Dendritic cell treated with granulocyte-macrophage colony-stimulating factor and Interleukin-4, amounts not matched to agents 40 ng/mL and 50 ng/mL, for 4 days (primary cell): ENCODE measurements at regions of chr15 and their contacts with region 1.

Region 1: DNA sequence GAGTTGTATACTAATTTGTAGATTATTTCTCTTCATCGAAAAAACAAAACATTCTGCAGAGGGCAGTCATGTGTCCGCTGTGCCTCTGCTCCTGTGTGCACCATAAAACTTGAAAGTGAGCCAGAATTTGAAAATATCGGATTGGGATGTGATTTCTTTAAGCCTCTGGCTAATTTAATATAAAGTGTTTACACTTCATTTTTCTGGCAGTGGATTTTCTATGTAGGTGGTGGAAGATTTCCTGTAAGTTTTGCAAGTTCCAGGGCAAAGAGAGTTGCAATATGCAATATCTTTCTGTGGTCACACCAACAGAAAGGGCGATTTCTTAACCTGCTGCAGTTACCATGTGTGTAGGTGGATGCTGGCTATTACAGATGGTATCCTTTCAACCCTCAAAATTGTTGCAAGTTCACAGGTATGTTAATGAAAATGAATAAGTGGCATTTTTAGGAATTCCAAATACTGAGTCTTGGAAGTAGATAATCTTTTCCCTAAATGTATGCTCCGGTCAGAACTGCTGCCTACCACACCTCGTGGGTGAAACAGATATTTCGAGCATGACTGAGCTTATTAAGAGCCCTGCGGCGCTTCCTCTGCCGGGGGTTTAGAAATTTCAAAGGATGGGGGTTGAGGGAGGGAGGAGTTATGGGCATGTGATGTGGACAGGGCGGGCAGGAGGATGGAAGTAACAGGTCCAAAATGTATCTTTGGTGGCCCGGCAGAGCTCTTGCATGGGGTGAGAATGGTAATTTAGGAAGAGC is 134.0 kb downstream of the PGPEP1L start:
- H3K4me3 Mint-ChIP-seq: peak overlapping the region; percentile 64
- H3K27ac Mint-ChIP-seq: peak overlapping the region; percentile 25
- H3K4me1 Mint-ChIP-seq: peaks cover 55% of the 10 kb centered on the region
- H3K27me3 Mint-ChIP-seq: no peaks in the 10 kb centered on the region

Region 2: GRCh38 chr15:98658831-98659699 is 214.6 kb before region 1 on chr15:
- intact Hi-C with region 1: no loop called
- H3K4me3 Mint-ChIP-seq: no peak overlapping the region
- H3K27ac Mint-ChIP-seq: no peak overlapping the region
- H3K4me1 Mint-ChIP-seq: peaks cover 30% of the 10 kb centered on the region
- H3K27me3 Mint-ChIP-seq: peaks cover 3% of the 10 kb centered on the region

Region 3: GRCh38 chr15:98779463-98780071 is 94.1 kb before region 1 on chr15:
- intact Hi-C with region 1: loop called (anchors 5 kb)
- H3K4me3 Mint-ChIP-seq: no peak overlapping the region
- H3K27ac Mint-ChIP-seq: no peak overlapping the region
- H3K4me1 Mint-ChIP-seq: peaks cover 25% of the 10 kb centered on the region
- H3K27me3 Mint-ChIP-seq: no peaks in the 10 kb centered on the region

Region 4: DNA sequence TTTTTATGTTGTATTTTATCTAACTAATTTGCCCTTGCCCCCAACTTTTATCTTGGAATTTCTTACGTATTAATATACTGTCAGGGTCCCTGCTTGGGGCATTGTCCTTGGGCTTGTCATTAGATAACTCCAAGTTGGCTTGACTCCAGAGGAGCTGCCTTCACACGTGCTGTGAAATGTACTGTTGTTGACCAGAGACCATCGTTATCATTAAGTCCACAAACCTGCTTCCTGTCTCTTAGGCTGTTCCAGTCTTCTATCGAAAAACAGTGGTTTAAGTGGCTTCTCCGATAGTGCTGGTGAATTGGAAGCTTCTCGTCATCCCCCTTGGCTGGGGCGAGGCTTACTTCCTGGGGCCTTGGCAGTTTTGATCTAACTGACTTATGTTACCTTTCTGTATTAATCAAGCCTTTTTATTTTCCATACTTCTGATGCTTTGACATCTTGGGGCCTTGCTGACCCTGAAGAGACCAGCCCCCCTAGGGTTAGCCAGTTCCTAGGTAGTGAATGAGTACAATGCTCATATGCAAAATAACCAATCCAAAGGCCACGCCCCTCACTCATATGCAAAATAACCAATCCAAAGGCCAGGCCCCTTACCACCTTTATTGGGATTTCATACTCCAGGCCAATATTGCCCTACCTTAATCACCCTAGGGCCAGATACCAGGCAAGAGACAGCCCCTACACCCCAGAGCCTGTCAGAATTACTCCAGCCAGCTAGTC is 60.7 kb before region 1 on chr15:
- intact Hi-C with region 1: no loop called
- H3K4me3 Mint-ChIP-seq: no peak overlapping the region
- H3K27ac Mint-ChIP-seq: no peak overlapping the region
- H3K4me1 Mint-ChIP-seq: no peaks in the 10 kb centered on the region
- H3K27me3 Mint-ChIP-seq: no peaks in the 10 kb centered on the region